HCT116 (cell line): ENCODE measurements at regions of chr13 and their contacts with region 1.

Region 1: DNA sequence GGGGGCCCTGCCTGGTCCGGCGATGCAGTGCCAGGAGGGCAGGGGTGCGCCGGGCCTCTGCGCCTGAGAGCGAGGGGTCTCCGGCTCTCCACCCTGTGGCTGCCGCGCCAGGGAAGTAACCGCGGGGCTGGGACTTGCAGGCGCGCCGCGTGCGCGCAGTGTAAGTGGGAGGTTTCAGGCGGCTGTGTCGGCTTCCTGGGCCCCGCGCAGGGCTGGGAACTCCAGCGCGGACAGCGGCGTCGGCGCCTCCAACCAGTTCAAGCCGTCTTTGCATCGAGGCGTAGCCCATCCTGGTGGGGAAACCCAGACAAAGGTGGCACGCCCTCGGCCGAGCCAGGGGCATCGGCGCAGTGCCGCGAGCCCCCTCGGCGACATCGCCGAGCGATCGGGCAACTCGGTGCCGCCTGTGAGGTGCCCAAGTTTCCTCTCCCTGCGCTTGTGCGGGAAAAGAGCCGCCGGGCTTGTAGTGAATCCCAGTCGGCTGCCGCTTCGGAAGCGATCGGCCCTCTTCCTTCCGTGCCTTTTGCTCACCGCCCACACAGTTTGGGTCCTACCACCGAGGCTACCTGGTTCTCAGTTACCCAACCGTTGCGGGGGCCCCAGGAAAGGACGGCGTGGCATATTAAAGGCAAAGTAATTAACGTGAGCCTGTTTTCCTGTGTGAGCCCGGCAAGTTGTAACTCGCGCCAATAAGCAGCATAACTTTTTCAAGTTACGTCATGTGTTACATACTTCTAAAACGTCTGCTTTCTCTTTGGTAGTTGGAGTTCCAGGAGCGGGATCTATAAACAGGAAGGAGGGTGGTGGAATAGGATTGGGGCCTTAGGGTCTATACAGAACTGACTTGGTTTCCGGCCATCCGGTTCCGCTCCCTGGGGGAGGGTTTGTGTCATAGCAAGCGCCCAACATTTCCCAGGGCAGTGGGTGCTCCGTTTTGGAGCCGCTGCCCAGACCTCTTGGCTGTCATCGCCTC is 1.2 kb downstream of the LRCH1 start:
- DNase-seq: peak; percentile 55
- ATAC-seq: peak; percentile 64
- H3K4me3 ChIP-seq: peak overlapping the region; percentile 88
- H3K27ac ChIP-seq: peak overlapping the region; percentile 76
- H3K4me1 ChIP-seq: peaks cover 10 to 23% of the 10 kb centered on the region in 2 experiments; a peak in 3 of 4 replicates
- H3K27me3 ChIP-seq: no peaks in the 10 kb centered on the region
- CTCF ChIP-seq: no peak; a peak in 1 of 6 replicates
- POLR2A ChIP-seq: peak; percentile 50
- RAD21 ChIP-seq: no peak

Region 2: DNA sequence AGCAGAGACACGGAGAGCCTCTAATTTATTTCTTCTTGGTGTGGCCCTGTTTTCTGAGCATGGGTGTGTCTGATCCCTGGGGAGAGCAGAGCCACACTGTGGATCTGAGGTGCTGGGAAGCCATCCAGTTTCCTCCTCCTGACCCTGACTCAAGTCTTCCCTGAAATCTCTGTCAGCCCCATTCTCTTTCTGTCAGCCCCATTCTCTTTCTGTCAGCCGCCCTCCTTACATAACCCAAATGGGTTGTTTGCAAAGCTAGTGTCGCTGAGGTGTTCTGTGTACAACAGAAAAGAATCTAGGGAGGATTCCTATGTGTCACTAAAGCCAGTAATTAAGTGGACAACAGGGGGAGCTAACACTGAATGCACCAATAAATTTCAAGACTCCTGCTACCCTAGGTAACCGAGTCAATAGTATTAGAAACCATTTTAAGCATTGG is 49.0 kb after region 1 on chr13:
- CTCF ChIA-PET with region 1: no interaction called
- POLR2A ChIA-PET with region 1: no interaction called
- RAD21 ChIA-PET with region 1: no interaction called
- intact Hi-C with region 1: loop called (anchors 5 kb)
- DNase-seq: no peak
- ATAC-seq: peak; percentile 65
- H3K4me3 ChIP-seq: no peak overlapping the region
- H3K27ac ChIP-seq: no peak overlapping the region
- H3K4me1 ChIP-seq: peaks cover 69 to 84% of the 10 kb centered on the region in 2 experiments
- H3K27me3 ChIP-seq: no peaks in the 10 kb centered on the region
- CTCF ChIP-seq: peak; percentile 9 to 66 (median 59); a peak in 4 of 6 replicates
- POLR2A ChIP-seq: no peak
- RAD21 ChIP-seq: peak; percentile 27; the same call in 1 of the 2 replicates